HepG2 (cell line): ENCODE measurements at regions of chr4 and their contacts with region 1.

Region 1: GRCh38 chr4:48127682-48128394 is 6.2 kb downstream of the TXK start:
- DNase-seq: peak; percentile 44
- ATAC-seq: peak; percentile 97
- H3K4me3 ChIP-seq: no peak overlapping the region
- H3K27ac ChIP-seq: no peak overlapping the region
- H3K4me1 ChIP-seq: no peaks in the 10 kb centered on the region
- H3K27me3 ChIP-seq: no peaks in the 10 kb centered on the region
- CTCF ChIP-seq: peak; percentile 70
- EP300 ChIP-seq: no peak
- POLR2A ChIP-seq: no peak
- RAD21 ChIP-seq: peak; percentile 58

Region 2: DNA sequence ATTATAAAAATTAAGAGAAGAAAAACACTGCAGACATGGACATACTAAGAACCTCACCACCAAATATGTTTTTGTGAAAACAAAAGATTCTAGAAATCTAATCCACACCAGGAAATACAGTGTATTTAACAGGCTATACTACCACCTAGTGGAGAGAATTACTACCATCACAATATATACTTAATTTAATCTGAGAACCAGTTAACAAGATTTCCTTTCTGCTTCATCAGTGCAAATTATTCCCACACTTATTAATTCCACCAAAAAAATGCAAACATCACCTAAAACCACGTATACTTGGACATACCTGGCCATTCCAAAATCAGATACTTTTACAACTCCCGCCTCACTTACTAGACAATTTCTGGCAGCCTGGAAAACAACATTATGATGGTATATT is 13.2 kb after region 1 on chr4:
- CTCF ChIA-PET with region 1: interaction called, 10 read pairs
- POLR2A ChIA-PET with region 1: no interaction called
- in situ Hi-C with region 1: no loop called
- intact Hi-C with region 1: loop called (anchors 2 kb)
- DNase-seq: peak; percentile 20
- ATAC-seq: peak; percentile 60
- H3K4me3 ChIP-seq: no peak overlapping the region
- H3K27ac ChIP-seq: no peak overlapping the region
- H3K4me1 ChIP-seq: no peaks in the 10 kb centered on the region
- H3K27me3 ChIP-seq: no peaks in the 10 kb centered on the region
- CTCF ChIP-seq: peak; percentile 44
- EP300 ChIP-seq: no peak
- POLR2A ChIP-seq: no peak
- RAD21 ChIP-seq: no peak

Region 3: DNA sequence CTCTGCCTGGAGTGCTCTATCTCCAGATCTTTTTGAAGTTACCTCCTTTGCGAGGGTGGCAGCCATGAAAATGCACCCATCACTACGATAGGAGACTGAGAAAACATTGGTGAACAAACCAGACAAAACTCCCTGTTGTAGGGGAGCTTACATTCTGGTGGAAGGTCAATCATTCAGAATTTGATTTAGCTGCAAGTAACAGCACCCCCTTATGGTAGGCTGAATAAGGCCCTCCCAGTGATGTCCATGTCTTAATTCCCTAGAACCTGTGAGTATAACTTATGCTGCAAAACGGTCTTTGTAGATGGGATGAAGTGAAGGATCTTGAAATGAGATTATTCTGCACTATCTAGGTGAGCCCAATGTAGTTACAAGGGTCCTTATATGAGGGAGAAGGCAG is 147.4 kb after region 1 on chr4:
- CTCF ChIA-PET with region 1: no interaction called
- POLR2A ChIA-PET with region 1: no interaction called
- in situ Hi-C with region 1: no loop called
- intact Hi-C with region 1: loop called (anchors 1 kb)
- DNase-seq: peak; percentile 15
- ATAC-seq: peak; percentile 70
- H3K4me3 ChIP-seq: no peak overlapping the region
- H3K27ac ChIP-seq: no peak overlapping the region
- H3K4me1 ChIP-seq: 0 out of 2 replicates have a peak, but pooled peaks cover 4% of the 10 kb centered on the region
- H3K27me3 ChIP-seq: peaks cover 0 to 7% of the 10 kb centered on the region in 2 experiments; a peak in 1 of 5 replicates
- CTCF ChIP-seq: peak; percentile 44
- EP300 ChIP-seq: no peak
- POLR2A ChIP-seq: no peak
- RAD21 ChIP-seq: no peak

Region 4: DNA sequence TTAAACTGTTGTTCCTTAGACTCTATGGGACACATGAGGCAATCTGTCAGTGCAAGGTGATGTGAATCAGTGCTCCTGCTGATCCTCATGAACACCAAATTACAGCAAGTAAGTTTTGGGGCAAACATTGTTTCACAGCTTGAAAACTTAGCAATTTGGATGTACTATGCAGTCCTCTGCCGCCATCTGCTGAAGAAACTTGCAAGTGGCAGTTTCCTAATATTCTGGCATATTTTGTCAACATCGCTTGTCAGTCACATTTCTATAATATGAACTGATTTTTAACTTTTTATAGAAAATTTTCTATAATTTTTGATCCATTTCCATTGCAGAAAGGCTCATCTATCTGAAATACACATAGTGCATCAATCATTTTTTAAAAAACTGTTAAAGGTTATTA is 418.5 kb after region 1 on chr4:
- CTCF ChIA-PET with region 1: interaction called, 10 read pairs
- POLR2A ChIA-PET with region 1: no interaction called
- in situ Hi-C with region 1: loop called (anchors 10 kb)
- intact Hi-C with region 1: loop called (anchors 1 kb)
- DNase-seq: peak; percentile 34
- ATAC-seq: no peak
- H3K4me3 ChIP-seq: no peak overlapping the region
- H3K27ac ChIP-seq: no peak overlapping the region
- H3K4me1 ChIP-seq: no peaks in the 10 kb centered on the region
- H3K27me3 ChIP-seq: no peaks in the 10 kb centered on the region
- CTCF ChIP-seq: peak; percentile 75
- EP300 ChIP-seq: no peak
- POLR2A ChIP-seq: no peak
- RAD21 ChIP-seq: peak; percentile 33; the same call in 1 of the 2 replicates